Ovary (tissue), 10 donors: ENCODE measurements at regions of chrX and their contacts with region 1.

Region 1: DNA sequence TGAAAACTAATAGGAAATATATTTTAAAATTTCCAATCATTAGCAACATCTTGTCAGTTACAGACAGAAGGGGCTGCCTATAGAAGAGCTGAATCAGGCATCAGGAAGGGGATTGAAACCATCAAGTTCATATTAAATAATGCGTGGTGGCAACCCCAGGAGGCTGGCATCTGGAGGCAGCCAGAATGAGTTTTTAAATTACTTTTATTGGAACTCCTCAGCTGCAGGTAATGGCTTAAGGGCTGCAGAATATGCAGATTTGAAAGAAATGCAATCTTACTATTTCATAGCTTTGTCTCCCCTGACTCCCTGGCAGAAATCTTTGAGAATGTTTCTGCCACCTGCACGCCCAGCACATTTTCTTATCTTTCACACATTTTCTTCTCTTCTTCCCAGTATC is 711.6 kb downstream of the PCDH19 start:
- DNase-seq: no peak
- H3K4me3 ChIP-seq: no peak overlapping the region
- H3K27ac ChIP-seq: no peak overlapping the region
- H3K4me1 ChIP-seq: no peaks in the 10 kb centered on the region
- H3K27me3 ChIP-seq: no peaks in the 10 kb centered on the region
- CTCF ChIP-seq: no peak
- EP300 ChIP-seq: no peak
- POLR2A ChIP-seq: no peak

Region 2: GRCh38 chrX:98707896-98708295 is 990.6 kb before region 1 on chrX:
- intact Hi-C with region 1: loop called in 1 of 4 experiments (anchors 5 kb)
- DNase-seq: no peak
- H3K4me3 ChIP-seq: no peak overlapping the region
- H3K27ac ChIP-seq: no peak overlapping the region
- H3K4me1 ChIP-seq: no peaks in the 10 kb centered on the region
- H3K27me3 ChIP-seq: no peaks in the 10 kb centered on the region
- CTCF ChIP-seq: no peak
- EP300 ChIP-seq: no peak
- POLR2A ChIP-seq: no peak